Sigmoid colon (tissue), 7 donors: ENCODE measurements at regions of chr3 and their contacts with region 1.

Region 1: GRCh38 chr3:29683018-29683993 is 402.4 kb downstream of the RBMS3 start:
- DNase-seq: no peak
- H3K4me3 ChIP-seq: no peak overlapping the region
- H3K27ac ChIP-seq: peak overlapping the region; percentile 47 to 69 (median 68)
- H3K4me1 ChIP-seq: peaks cover 0 to 33% (median 13%) of the 10 kb centered on the region in 4 donors
- H3K27me3 ChIP-seq: no peaks in the 10 kb centered on the region
- CTCF ChIP-seq: no peak
- EP300 ChIP-seq: no peak
- POLR2A ChIP-seq: no peak

Region 2: DNA sequence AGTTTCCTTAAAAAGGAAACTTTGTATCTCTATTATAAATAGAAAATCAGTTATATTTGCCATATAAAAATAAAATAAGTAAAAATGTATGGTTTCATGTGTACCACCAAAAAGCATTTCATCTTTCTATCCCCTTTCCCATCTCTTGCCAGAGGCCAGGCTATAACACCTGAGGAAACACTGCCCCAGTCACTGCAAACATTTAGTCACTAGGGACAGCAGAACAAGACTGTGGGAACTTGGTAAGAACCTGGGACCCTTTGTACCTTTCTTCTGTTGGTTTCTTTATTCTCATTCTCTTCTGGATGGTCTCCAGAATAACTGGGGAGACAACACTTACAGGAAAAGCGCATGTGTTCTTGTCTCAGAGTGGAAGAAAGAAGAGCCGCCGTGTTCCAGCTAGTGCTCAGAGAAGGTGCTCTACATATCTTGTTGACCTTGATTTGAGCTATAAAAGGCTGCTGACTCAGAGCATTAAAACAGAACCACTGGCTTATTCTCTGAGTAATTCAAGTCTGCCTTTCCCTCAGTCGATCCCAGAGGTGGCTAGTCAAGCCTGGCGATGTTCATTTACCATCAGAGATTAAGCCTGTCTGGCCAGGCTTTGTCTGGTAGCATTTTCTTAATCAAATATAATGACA is 40.8 kb before region 1 on chr3:
- intact Hi-C with region 1: loop called (anchors 5 kb)
- DNase-seq: no peak
- H3K4me3 ChIP-seq: no peak overlapping the region
- H3K27ac ChIP-seq: peak overlapping the region; percentile 34 to 82 (median 70)
- H3K4me1 ChIP-seq: peaks cover 0 to 46% (median 32%) of the 10 kb centered on the region in 4 donors
- H3K27me3 ChIP-seq: no peaks in the 10 kb centered on the region
- CTCF ChIP-seq: no peak
- EP300 ChIP-seq: no peak
- POLR2A ChIP-seq: no peak